A673 (cell line): ENCODE measurements at regions of chr17 and their contacts with region 1.

Region 1: DNA sequence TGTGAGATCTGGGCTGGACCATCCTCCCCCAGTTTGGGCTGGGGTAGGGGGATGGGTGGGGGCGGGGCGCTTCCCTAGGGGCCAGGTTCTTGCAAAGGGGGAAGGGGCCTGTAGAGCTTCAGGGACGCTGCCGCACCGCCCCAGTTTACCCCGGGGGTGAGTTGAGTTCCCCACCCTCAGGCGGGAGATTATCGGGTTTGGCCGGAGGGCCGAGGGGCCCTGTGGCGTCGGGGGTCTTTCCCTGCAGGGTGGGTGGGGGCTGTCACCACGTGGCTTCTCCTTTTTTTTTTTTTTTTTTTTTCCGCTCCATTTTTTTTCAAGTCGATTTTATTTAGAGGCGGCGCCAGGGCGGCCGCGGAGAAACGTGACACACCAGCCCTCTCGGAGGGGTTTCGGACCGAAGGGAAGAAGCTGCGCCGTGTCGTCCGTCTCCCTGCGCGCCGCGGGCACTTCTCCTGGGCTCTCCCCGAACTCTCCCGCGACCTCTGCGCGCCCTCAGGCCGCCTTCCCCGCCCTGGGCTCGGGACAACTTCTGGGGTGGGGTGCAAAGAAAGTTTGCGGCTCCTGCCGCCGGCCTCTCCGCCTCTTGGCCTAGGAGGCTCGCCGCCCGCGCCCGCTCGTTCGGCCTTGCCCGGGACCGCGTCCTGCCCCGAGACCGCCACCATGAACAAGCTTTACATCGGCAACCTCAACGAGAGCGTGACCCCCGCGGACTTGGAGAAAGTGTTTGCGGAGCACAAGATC is at the start of gene IGF2BP1:
- DNase-seq: peak; percentile 97
- H3K4me3 ChIP-seq: peak within 1 kb of the TSS; percentile 97
- H3K27ac ChIP-seq: peak within 1 kb of the TSS; percentile 100
- H3K4me1 ChIP-seq: peaks cover 21% of the 10 kb centered on the region
- H3K27me3 ChIP-seq: no peaks in the 10 kb centered on the region
- CTCF ChIP-seq: no peak
- total RNA-seq, gene IGF2BP1: 495 and 517 TPM in 2 replicates

Region 2: DNA sequence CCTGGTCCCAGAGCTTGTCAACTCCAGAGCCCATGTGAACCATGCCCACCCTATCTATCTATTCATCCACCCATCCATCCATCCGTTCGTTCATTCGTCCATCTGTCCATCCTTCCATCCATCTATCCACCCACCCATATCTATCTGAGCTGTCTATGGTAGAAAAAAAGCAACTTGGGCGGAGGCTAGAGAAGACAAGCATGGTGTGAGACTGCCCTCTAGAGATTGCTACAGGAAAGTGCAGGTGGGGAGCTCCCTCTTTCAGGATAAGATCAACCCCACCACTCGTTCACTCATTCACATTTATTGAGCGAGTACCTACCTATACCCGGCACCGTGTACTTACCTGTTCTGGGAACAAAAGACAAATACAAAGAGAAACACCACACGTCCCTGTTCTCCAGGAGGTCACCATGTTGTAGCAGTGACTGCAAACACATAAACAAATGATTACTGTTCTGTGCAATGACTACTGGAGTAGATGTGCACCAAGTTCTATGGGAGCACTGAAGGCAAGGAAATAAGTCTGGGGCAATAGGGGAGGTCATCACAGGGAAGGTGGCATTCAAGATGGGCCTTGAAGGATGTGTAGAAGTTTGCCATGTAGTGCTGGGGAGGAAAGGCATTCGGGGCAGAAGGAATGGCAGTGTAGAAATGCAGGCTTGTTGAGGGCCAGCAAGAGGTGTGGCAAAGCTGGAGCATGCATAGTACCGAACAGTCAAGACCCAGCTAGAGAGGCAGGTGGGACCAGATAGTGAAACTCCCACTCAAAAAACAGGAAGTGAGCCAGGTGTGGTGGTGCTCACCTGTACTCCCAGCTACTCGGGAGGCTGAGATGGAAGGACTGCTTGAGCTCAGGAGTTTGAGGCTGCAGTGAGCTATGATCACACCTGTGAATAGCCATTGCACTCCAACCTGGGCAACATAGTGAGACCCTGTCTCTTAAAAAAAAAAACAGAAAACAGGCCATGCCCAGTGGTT is 118.0 kb before region 1 on chr17:
- CTCF ChIA-PET with region 1: no interaction called
- POLR2A ChIA-PET with region 1: no interaction called
- intact Hi-C with region 1: no loop called
- DNase-seq: peak; percentile 82
- H3K4me3 ChIP-seq: no peak overlapping the region
- H3K27ac ChIP-seq: no peak overlapping the region
- H3K4me1 ChIP-seq: no peaks in the 10 kb centered on the region
- H3K27me3 ChIP-seq: no peaks in the 10 kb centered on the region
- CTCF ChIP-seq: peak; percentile 95

Region 3: DNA sequence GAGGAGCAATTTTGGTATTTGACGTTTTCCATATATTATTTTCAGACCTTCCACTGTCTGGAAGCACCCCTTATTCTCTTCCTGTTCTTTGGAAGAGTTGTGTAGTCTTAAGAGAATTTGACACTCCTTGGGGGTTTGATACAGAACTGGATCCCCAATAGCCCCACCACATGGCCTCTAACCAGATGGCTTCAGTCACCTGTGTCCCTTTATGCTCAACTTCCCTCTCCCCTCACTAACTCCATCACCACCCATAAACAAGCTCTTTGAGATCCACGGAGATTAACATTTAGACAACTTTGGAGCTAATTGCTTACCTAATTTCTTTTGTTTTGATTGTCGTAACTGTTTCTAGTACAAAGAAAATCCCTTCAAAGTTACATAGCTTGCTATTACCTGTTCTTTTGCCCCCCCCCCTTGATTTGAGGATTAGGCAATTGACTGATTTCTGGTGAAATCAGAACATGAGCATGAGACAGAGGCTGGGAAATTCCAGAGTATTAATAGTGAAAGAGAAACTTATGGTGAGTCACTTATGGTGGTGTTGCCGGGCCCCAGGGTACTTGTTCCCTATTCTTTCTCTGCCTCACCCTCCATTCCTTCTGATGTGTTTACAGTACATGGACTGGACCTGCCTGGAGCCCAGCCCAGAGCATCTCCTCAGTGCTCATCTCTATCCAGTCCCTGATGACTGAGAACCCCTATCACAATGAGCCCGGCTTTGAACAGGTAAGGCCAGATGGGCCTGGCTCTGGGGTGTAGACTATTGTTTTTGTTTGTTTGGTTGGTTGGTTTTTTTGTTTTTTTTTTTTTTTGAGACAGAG is 81.6 kb before region 1 on chr17:
- CTCF ChIA-PET with region 1: no interaction called
- POLR2A ChIA-PET with region 1: no interaction called
- intact Hi-C with region 1: no loop called
- DNase-seq: peak; percentile 33
- H3K4me3 ChIP-seq: no peak overlapping the region
- H3K27ac ChIP-seq: peak overlapping the region; percentile 68
- H3K4me1 ChIP-seq: peaks cover 13% of the 10 kb centered on the region
- H3K27me3 ChIP-seq: no peaks in the 10 kb centered on the region
- CTCF ChIP-seq: no peak

Region 4: GRCh38 chr17:49016788-49017463 is 19.7 kb after region 1 on chr17:
- CTCF ChIA-PET with region 1: interaction called, 8 read pairs
- POLR2A ChIA-PET with region 1: interaction called, 16 read pairs
- intact Hi-C with region 1: no loop called
- DNase-seq: peak; percentile 97
- H3K4me3 ChIP-seq: peak overlapping the region; percentile 13
- H3K27ac ChIP-seq: peak overlapping the region; percentile 34
- H3K4me1 ChIP-seq: peaks cover 92% of the 10 kb centered on the region
- H3K27me3 ChIP-seq: no peaks in the 10 kb centered on the region
- CTCF ChIP-seq: no peak

Region 5: GRCh38 chr17:49146620-49147306 is 149.5 kb after region 1 on chr17:
- CTCF ChIA-PET with region 1: no interaction called
- POLR2A ChIA-PET with region 1: no interaction called
- intact Hi-C with region 1: no loop called
- DNase-seq: peak; percentile 66
- H3K4me3 ChIP-seq: no peak overlapping the region
- H3K27ac ChIP-seq: no peak overlapping the region
- H3K4me1 ChIP-seq: no peaks in the 10 kb centered on the region
- H3K27me3 ChIP-seq: no peaks in the 10 kb centered on the region
- CTCF ChIP-seq: no peak

Region 6: DNA sequence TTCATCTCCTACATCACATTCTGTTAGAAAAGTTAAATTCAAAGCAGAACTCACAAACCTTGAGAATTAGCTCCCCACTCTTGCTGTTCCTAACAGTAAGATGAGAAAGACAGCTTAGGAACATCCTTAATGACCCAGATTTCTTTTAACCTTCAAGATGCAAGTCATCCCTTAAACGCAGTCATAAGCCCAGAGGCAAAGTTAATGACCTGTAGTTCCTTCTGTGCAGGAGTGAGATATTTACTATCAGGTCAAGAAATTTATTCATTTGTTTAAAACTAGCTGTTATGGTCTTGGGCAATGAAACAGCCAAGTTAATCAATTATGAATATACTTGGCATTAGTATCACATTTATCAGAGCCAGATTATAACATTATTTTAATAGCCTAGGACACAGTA is 615.5 kb after region 1 on chr17:
- CTCF ChIA-PET with region 1: no interaction called
- POLR2A ChIA-PET with region 1: interaction called, 10 read pairs
- intact Hi-C with region 1: no loop called
- DNase-seq: no peak
- H3K4me3 ChIP-seq: no peak overlapping the region
- H3K27ac ChIP-seq: no peak overlapping the region
- H3K4me1 ChIP-seq: peaks cover 11% of the 10 kb centered on the region
- H3K27me3 ChIP-seq: no peaks in the 10 kb centered on the region
- CTCF ChIP-seq: no peak